PC-3 (cell line): ENCODE measurements at regions of chr5 and their contacts with region 1.

Region 1: DNA sequence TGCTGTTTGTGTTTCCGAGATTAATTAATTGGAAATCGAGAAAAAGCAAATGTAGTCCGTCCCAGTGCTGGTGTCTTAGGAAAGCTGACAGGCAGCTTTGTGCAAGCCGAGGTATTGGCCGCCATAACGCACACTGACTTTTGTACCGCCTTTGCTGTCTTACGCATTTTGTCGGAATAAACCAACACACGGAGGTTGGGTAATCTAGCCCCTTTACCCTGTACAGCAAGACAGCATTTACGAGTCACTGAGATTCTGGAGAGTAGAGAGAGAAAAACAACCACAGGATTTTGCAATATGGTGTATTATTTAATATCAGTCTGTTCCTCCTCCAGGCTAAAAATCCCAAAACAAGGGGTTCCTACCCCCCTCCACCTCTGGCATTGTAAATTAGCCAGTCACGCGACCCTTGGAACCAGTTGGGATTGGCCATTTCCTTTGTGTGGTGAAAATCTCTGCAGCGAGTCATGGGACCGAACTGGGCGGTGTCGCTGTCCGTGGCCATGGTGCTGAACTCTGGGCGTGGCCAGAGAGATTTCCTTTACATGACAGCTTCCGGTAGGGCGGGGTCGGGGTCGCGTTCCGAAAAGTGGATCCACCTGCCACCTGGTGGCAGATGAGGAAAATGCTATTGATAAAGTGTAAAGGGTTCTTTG is 10.3 kb upstream of the PCDHB1 start:
- DNase-seq: peak; percentile 95
- ATAC-seq: peak; percentile 79
- H3K4me3 ChIP-seq: peak overlapping the region; percentile 82
- H3K27ac ChIP-seq: peak overlapping the region; percentile 79
- H3K4me1 ChIP-seq: peaks cover 9% of the 10 kb centered on the region
- H3K27me3 ChIP-seq: no peaks in the 10 kb centered on the region
- CTCF ChIP-seq: peak; percentile 84

Region 2: GRCh38 chr5:140806834-140807775 is 233.8 kb before region 1 on chr5 and contains the start of gene PCDHA4:
- CTCF ChIA-PET with region 1: no interaction called
- POLR2A ChIA-PET with region 1: no interaction called
- intact Hi-C with region 1: loop called (anchors 1 kb)
- DNase-seq: peak; percentile 59
- ATAC-seq: peak; percentile 89
- H3K4me3 ChIP-seq: peak within 1 kb of the TSS; percentile 72
- H3K27ac ChIP-seq: no peak within 1 kb of the TSS
- H3K4me1 ChIP-seq: no peaks in the 10 kb centered on the region
- H3K27me3 ChIP-seq: no peaks in the 10 kb centered on the region
- CTCF ChIP-seq: peak; percentile 57
- total RNA-seq, gene PCDHA4: 1.5 and 1.6 TPM in 2 replicates

Region 3: GRCh38 chr5:140840978-140841959 is 199.6 kb before region 1 on chr5 and contains the start of gene PCDHA8:
- CTCF ChIA-PET with region 1: interaction called, 24 read pairs
- POLR2A ChIA-PET with region 1: no interaction called
- intact Hi-C with region 1: loop called (anchors 1 kb)
- DNase-seq: peak; percentile 73
- ATAC-seq: peak; percentile 92
- H3K4me3 ChIP-seq: peak within 1 kb of the TSS; percentile 74
- H3K27ac ChIP-seq: no peak within 1 kb of the TSS
- H3K4me1 ChIP-seq: no peaks in the 10 kb centered on the region
- H3K27me3 ChIP-seq: no peaks in the 10 kb centered on the region
- CTCF ChIP-seq: peak; percentile 69
- total RNA-seq, gene PCDHA8: 0.11 TPM in 1 of 2 replicates, not detected in the other

Region 4: DNA sequence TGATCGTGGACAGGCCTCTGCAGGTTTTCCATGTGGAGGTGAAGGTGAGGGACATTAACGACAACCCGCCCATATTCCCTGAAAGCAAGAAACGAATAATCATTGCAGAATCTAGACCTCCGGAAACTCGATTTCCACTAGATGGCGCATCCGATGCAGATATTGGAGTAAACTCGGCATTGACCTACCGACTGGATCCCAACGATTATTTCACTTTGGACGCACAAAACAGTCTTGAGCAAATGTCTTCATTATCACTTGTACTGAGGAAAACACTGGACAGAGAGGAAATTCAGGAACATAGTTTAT is 158.4 kb before region 1 on chr5:
- CTCF ChIA-PET with region 1: interaction called, 7 read pairs
- POLR2A ChIA-PET with region 1: no interaction called
- intact Hi-C with region 1: loop called (anchors 1 kb)
- DNase-seq: peak; percentile 81
- ATAC-seq: peak; percentile 74
- H3K4me3 ChIP-seq: peak overlapping the region; percentile 73
- H3K27ac ChIP-seq: 0 out of 2 replicates have a peak overlapping the region, but pooled peaks have one; percentile 33
- H3K4me1 ChIP-seq: peaks cover 8% of the 10 kb centered on the region; the same call in 1 of the 2 replicates
- H3K27me3 ChIP-seq: no peaks in the 10 kb centered on the region
- CTCF ChIP-seq: peak; percentile 59

Region 5: GRCh38 chr5:140966293-140967225 is 74.3 kb before region 1 on chr5 and contains the start of gene PCDHAC2:
- CTCF ChIA-PET with region 1: interaction called, 4 read pairs
- POLR2A ChIA-PET with region 1: interaction called, 6 read pairs
- intact Hi-C with region 1: loop called (anchors 1 kb)
- DNase-seq: peak; percentile 60
- ATAC-seq: peak; percentile 79
- H3K4me3 ChIP-seq: peak within 1 kb of the TSS; percentile 90
- H3K27ac ChIP-seq: no peak within 1 kb of the TSS
- H3K4me1 ChIP-seq: peaks cover 21% of the 10 kb centered on the region
- H3K27me3 ChIP-seq: no peaks in the 10 kb centered on the region
- CTCF ChIP-seq: no peak
- total RNA-seq, gene PCDHAC2: 4.2 and 8.2 TPM in 2 replicates

Region 6: GRCh38 chr5:142145106-142145900 is 1104.4 kb after region 1 on chr5:
- CTCF ChIA-PET with region 1: no interaction called
- POLR2A ChIA-PET with region 1: no interaction called
- intact Hi-C with region 1: no loop called
- DNase-seq: peak; percentile 74
- ATAC-seq: peak; percentile 91
- H3K4me3 ChIP-seq: no peak overlapping the region
- H3K27ac ChIP-seq: no peak overlapping the region
- H3K4me1 ChIP-seq: no peaks in the 10 kb centered on the region
- H3K27me3 ChIP-seq: no peaks in the 10 kb centered on the region
- CTCF ChIP-seq: peak; percentile 81